ENCODE measurements at regions of chr10 and their contacts with region 1.

Region 1: DNA sequence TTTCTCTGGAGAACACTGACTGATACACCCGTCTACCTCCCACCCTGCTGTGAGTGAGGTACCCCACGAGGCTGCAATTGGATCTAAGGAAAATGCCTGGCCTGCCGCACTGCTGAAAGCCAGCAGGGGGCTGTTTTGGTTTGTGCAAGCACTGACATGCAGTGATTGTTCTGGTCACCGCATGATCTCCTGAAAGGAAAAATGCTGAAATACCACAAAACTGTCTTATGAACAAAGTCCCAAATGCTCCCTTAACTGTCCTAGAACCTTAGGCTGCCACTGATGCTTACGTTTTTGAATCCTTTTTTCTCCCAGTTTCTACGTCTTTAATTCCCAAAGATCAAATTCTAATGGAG is 132.7 kb downstream of the JCAD start:
- DNase-seq: no peak
- ATAC-seq: peak in 2 of 4 donors; percentile 76 to 81
- H3K4me3 ChIP-seq: no peak overlapping the region
- H3K27ac ChIP-seq: no peak overlapping the region
- H3K4me1 ChIP-seq: no peaks in the 10 kb centered on the region
- H3K27me3 ChIP-seq: no peaks in the 10 kb centered on the region
- CTCF ChIP-seq: peak; percentile 26

Region 2: DNA sequence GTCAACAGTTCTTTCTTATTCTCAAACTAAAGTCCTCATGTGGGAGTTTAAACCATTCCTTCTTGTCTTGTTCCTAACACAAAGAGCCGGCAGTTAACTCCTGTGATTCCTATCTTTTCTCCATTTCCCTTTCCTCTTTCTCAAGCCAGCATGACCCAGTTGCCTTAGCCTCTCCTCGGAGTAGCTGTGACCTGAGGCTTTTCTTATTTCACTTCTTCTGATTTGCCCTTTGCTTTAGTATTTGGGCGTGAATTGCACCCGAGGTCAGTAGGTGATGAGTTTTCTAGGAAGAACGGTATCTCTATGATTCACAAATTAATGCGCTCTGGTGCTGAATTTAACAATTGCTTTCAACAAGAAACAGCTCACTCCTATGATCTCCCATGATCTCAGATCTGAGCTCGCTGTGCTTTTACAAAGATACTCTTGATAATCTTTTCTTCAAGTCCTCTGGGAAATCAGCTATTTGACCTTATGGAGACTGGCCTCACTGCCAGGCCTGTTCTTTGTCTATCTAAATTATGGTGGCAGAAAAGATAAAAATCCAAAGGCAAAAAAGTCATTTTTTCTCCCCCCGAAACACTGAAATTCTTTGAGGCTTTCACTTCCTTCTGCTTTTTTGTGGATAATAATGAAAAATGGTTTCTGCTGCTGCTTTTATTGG is 51.9 kb before region 1 on chr10:
- intact Hi-C with region 1: loop called in 1 of 2 experiments (anchors 5 kb)
- DNase-seq: no peak
- ATAC-seq: no peak
- H3K4me3 ChIP-seq: no peak overlapping the region
- H3K27ac ChIP-seq: no peak overlapping the region
- H3K4me1 ChIP-seq: no peaks in the 10 kb centered on the region
- H3K27me3 ChIP-seq: no peaks in the 10 kb centered on the region
- CTCF ChIP-seq: no peak

Region 3: DNA sequence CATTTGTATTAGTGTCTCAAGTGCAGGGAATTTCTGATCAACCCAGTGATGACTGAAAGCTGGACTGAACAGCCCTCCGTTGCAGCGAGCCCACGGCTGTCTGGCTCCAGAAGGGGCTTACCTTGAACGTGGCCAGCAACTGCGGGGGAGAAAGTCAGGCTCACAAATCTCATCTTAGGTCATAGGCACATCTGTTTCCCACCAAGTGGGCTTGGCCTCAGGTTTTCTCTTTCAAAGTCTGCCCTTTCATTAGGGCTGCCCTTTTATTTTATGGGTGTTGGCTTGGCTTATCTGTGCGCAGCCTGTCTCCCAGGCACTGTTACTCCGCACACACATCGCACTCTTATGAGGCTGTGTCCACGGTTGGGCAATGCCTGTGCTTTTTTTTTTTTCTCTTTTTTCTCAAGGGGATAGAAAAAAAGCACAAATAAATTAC is 45.3 kb before region 1 on chr10:
- intact Hi-C with region 1: loop called in 1 of 2 experiments (anchors 5 kb)
- DNase-seq: peak in 1 of 2 donors; percentile 62
- ATAC-seq: peak in 1 of 4 donors; percentile 62
- H3K4me3 ChIP-seq: no peak overlapping the region
- H3K27ac ChIP-seq: no peak overlapping the region
- H3K4me1 ChIP-seq: no peaks in the 10 kb centered on the region
- H3K27me3 ChIP-seq: no peaks in the 10 kb centered on the region
- CTCF ChIP-seq: no peak